ENCODE measurements at regions of chr13 and their contacts with region 1.

Region 1: DNA sequence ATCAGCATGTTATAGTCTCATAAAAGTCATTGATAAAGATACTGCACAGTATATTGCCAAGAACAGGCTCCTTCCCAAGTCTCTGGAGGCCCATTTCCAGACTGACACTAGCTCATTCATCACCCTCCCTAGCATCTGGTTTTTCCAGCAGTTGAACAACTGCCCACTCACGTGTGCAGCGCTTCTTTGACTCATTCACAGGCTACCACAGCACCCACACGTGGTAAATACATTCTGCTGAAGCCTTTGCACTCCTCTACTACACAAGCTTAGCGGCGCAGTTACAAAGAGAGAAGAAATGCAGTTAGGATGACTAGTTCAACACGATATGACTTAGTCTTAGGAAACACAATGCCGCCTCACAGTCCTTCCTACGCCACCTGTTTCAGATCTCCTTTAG is 87.7 kb downstream of the DOCK9 start:
- DNase-seq: peak; percentile 23 to 52
- H3K4me3 ChIP-seq: no peak overlapping the region
- H3K27ac ChIP-seq: peak overlapping the region; percentile 55
- H3K4me1 ChIP-seq: peaks cover 17% of the 10 kb centered on the region
- H3K27me3 ChIP-seq: no peaks in the 10 kb centered on the region
- CTCF ChIP-seq: no peak

Region 2: GRCh38 chr13:98504371-98504963 is 385.7 kb before region 1 on chr13:
- CTCF ChIA-PET with region 1: no interaction called
- POLR2A ChIA-PET with region 1: interaction called, 14 read pairs
- intact Hi-C with region 1: no loop called
- DNase-seq: no peak
- H3K4me3 ChIP-seq: no peak overlapping the region
- H3K27ac ChIP-seq: no peak overlapping the region
- H3K4me1 ChIP-seq: peaks cover 42% of the 10 kb centered on the region
- H3K27me3 ChIP-seq: no peaks in the 10 kb centered on the region
- CTCF ChIP-seq: no peak

Region 3: GRCh38 chr13:98918771-98919170 is 28.6 kb after region 1 on chr13:
- CTCF ChIA-PET with region 1: no interaction called
- POLR2A ChIA-PET with region 1: no interaction called
- intact Hi-C with region 1: no loop called
- DNase-seq: no peak
- H3K4me3 ChIP-seq: no peak overlapping the region
- H3K27ac ChIP-seq: no peak overlapping the region
- H3K4me1 ChIP-seq: no peaks in the 10 kb centered on the region
- H3K27me3 ChIP-seq: no peaks in the 10 kb centered on the region
- CTCF ChIP-seq: no peak